ENCODE measurements at regions of chr2 and their contacts with region 1.

Region 1: DNA sequence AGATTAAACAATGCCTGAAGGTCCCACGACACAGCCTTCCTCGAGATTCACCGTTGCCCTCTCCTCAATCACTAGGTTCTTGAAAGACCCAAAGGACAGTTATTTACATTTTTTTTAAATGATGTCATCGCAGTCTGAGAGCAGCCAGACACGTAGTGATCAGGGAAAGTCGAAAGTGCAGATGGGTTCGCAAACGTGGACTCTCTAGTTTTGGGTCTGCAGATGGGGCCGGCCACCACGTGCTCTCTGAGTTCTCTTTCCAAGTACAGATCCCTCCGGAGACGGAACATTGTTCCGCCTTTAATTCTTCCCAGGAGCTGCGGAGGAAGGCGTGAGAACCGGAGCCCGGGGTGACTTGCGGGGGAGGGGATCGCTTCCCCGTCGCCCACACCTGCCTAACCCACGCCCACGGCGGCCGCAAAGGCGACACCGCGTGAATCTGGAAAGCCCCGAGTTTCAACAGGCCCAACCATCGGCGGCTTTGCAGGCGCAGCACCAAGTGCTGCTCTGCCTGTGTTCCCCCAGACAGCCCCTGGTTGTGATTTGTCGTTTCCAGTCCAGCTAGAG is 54.3 kb downstream of the PKDCC start:
- DNase-seq: peak; percentile 96 to 98 (median 96)
- H3K4me3 ChIP-seq: peak overlapping the region; percentile 53 to 64
- H3K4me3 Mint-ChIP-seq: peak overlapping the region in 7 of 8 donors; percentile 85 to 90 (median 87)
- H3K27ac ChIP-seq: peak overlapping the region; percentile 100
- H3K27ac Mint-ChIP-seq: no peak overlapping the region
- H3K4me1 ChIP-seq: peaks cover 94% of the 10 kb centered on the region
- H3K4me1 Mint-ChIP-seq: peaks cover 38 to 64% (median 51%) of the 10 kb centered on the region in 4 donors
- H3K27me3 ChIP-seq: no peaks in the 10 kb centered on the region
- H3K27me3 Mint-ChIP-seq: no peaks in the 10 kb centered on the region

Region 2: GRCh38 chr2:42117923-42118753 is 16.0 kb after region 1 on chr2:
- CTCF ChIA-PET with region 1: interaction called, 26 read pairs
- POLR2A ChIA-PET with region 1: interaction called, 1,146 read pairs
- intact Hi-C with region 1: loop called (anchors 1 kb)
- DNase-seq: no peak
- H3K4me3 ChIP-seq: no peak overlapping the region
- H3K4me3 Mint-ChIP-seq: peak overlapping the region in 3 of 8 donors; percentile 21 to 52 (median 36)
- H3K27ac ChIP-seq: peak overlapping the region; percentile 18
- H3K27ac Mint-ChIP-seq: peak overlapping the region; percentile 45 to 94 (median 80)
- H3K4me1 ChIP-seq: peaks cover 56% of the 10 kb centered on the region
- H3K4me1 Mint-ChIP-seq: peaks cover 39 to 60% (median 48%) of the 10 kb centered on the region in 4 donors
- H3K27me3 ChIP-seq: no peaks in the 10 kb centered on the region
- H3K27me3 Mint-ChIP-seq: no peaks in the 10 kb centered on the region

Region 3: GRCh38 chr2:42132966-42133641 is 31.0 kb after region 1 on chr2:
- CTCF ChIA-PET with region 1: interaction called, 173 read pairs
- POLR2A ChIA-PET with region 1: interaction called, 1,146 read pairs
- intact Hi-C with region 1: loop called (anchors 1 kb)
- DNase-seq: peak; percentile 92 to 99 (median 96)
- H3K4me3 ChIP-seq: peak overlapping the region; percentile 16 to 21
- H3K4me3 Mint-ChIP-seq: peak overlapping the region; percentile 58 to 88 (median 76)
- H3K27ac ChIP-seq: peak overlapping the region; percentile 93
- H3K27ac Mint-ChIP-seq: peak overlapping the region; percentile 88 to 100 (median 99)
- H3K4me1 ChIP-seq: peaks cover 99% of the 10 kb centered on the region
- H3K4me1 Mint-ChIP-seq: peaks cover 68 to 100% (median 88%) of the 10 kb centered on the region in 4 donors
- H3K27me3 ChIP-seq: no peaks in the 10 kb centered on the region
- H3K27me3 Mint-ChIP-seq: no peaks in the 10 kb centered on the region

Region 4: DNA sequence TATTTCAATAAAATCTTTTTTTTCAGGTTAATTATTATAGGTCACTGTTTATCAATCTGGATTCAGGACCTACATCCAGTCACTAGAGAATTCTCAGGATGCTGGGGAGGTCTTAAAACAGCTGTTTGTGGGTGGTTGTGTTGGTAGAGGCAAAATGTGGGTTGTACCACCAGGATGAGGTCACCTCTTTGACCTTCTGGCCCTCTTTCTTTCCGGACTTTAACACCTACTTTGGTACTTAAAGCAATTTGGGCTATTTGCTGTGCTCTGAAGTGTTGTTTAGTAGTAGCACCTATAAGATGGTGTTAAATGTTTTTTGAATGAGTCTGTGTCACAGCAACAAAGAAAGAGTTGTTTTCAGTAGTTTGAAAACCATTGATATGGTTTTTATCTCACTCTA is 81.7 kb after region 1 on chr2:
- CTCF ChIA-PET with region 1: interaction called, 10 read pairs
- POLR2A ChIA-PET with region 1: interaction called, 20 read pairs
- intact Hi-C with region 1: no loop called
- DNase-seq: no peak
- H3K4me3 ChIP-seq: no peak overlapping the region
- H3K4me3 Mint-ChIP-seq: peak overlapping the region in 3 of 8 donors; percentile 19 to 47 (median 40)
- H3K27ac ChIP-seq: no peak overlapping the region
- H3K27ac Mint-ChIP-seq: peak overlapping the region in 2 of 7 donors; percentile 27 to 38
- H3K4me1 ChIP-seq: peaks cover 88% of the 10 kb centered on the region
- H3K4me1 Mint-ChIP-seq: peaks cover 63 to 90% (median 76%) of the 10 kb centered on the region in 4 donors
- H3K27me3 ChIP-seq: no peaks in the 10 kb centered on the region
- H3K27me3 Mint-ChIP-seq: no peaks in the 10 kb centered on the region

Region 5: GRCh38 chr2:42296226-42296625 is 194.1 kb after region 1 on chr2:
- CTCF ChIA-PET with region 1: no interaction called
- POLR2A ChIA-PET with region 1: interaction called, 5 read pairs
- intact Hi-C with region 1: loop called (anchors 1 kb)
- DNase-seq: no peak
- H3K4me3 ChIP-seq: no peak overlapping the region
- H3K4me3 Mint-ChIP-seq: peak overlapping the region; percentile 18 to 84 (median 52)
- H3K27ac ChIP-seq: peak overlapping the region; percentile 3
- H3K27ac Mint-ChIP-seq: peak overlapping the region; percentile 9 to 95 (median 89)
- H3K4me1 ChIP-seq: peaks cover 79% of the 10 kb centered on the region
- H3K4me1 Mint-ChIP-seq: peaks cover 51 to 83% (median 61%) of the 10 kb centered on the region in 4 donors
- H3K27me3 ChIP-seq: no peaks in the 10 kb centered on the region
- H3K27me3 Mint-ChIP-seq: no peaks in the 10 kb centered on the region